Naive thymus-derived CD8-positive, alpha-beta T cell (primary cell): ENCODE measurements at regions of chr5 and their contacts with region 1.

Region 1: DNA sequence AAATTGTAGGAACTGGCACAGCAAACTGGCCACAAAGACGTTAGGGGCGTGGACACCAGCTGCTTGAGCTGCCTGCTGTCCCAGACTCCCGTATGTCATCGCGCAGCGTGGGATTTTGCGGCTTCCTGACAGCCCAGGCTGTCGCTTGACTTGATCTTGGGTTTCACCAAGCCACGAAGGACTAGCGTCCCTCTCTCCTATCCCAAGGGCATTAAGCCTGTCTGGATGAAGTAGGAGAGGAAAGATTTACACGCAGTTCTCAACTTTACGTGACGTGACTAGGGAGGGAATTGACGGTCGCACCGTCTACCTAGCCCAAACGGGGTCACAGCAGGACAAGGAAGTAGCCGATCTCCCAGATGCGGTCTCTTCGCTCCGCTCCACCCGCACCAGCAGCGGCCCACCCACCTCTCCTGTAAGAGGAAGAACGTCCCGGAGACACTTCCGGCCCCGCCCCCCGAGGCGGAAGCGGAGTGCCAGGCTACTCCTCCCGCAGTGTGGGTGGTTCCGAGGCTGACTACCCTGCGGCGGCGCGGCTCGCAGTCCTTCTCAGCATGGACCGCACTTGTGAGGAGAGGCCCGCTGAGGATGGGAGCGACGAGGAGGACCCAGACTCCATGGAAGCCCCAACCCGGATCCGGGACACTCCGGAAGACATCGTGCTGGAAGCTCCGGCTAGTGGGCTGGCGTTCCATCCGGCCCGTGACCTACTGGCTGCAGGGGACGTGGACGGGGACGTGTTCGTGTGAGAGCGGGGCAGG is at the start of gene WDR55:
- DNase-seq: peak; percentile 91 to 98 (median 94)
- ATAC-seq: peak; percentile 91 to 93
- H3K4me3 Mint-ChIP-seq: peak within 1 kb of the TSS; percentile 91 to 99 (median 97)
- H3K27ac Mint-ChIP-seq: peak within 1 kb of the TSS; percentile 97 to 99 (median 98)
- H3K4me1 Mint-ChIP-seq: peaks cover 24 to 47% (median 38%) of the 10 kb centered on the region in 4 donors
- H3K27me3 Mint-ChIP-seq: no peaks in the 10 kb centered on the region
- polyA plus RNA-seq, gene WDR55: 9.2 to 15.6 (median 9.6) TPM

Region 2: DNA sequence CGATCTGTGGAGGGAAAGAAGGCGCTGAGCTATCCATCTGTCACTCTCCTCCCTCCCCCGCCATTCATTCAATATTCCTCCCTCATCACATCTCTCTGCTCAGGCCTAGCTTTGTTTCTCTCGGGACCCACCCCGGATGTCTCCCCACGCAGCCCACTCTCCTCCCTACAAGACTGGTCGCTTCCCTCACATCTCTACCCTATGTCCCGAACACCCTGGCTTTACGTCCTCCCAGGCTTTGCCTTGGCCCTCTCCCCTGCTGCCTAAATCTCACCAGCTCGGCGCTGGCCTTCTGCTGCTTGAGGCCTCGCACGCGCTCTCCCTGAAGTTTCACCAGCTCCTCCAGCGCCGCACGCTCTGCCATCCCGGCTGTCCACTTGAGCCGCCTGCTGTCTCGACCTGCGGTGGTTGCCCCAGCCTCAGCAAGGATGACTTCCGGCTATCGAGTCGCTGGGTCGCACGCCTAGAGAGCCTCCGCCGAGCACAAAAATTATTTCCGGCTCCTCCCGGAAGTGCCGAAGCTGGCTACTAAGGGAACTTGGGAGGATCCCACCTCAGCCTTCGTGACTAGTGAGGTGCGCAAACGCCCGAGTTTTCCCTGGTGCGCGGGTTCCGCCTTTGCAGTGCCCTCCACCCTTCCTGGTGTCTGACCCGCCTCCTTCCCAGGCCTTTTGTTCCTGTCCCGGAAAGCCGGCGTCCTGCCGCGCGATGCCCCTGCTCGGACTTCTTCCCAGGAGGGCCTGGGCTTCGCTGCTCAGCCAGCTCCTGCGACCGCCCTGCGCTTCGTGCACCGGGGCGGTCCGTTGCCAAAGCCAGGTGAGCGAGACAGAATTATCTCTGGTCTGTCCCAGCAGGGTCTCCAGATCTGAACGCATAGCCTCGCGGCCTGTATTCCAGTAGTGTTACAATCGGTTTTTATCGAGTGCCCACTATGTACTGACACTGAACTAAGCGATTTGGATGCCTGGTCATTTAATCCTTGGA is 26.7 kb after region 1 on chr5 and contains the starts of genes HARS1 and HARS2:
- POLR2A ChIA-PET with region 1: interaction called, 23 read pairs
- DNase-seq: peak; percentile 60 to 87 (median 77)
- ATAC-seq: peak; percentile 92 to 94
- H3K4me3 Mint-ChIP-seq: peak within 1 kb of the TSS; percentile 99 to 100 (median 99)
- H3K27ac Mint-ChIP-seq: peak within 1 kb of the TSS; percentile 90 to 99 (median 98)
- H3K4me1 Mint-ChIP-seq: peaks cover 14 to 49% (median 46%) of the 10 kb centered on the region in 4 donors
- H3K27me3 Mint-ChIP-seq: no peaks in the 10 kb centered on the region
- polyA plus RNA-seq, gene HARS1: 63.2 to 77.5 (median 65.3) TPM
- polyA plus RNA-seq, gene HARS2: 15.4 to 24.6 (median 20.1) TPM

Region 3: DNA sequence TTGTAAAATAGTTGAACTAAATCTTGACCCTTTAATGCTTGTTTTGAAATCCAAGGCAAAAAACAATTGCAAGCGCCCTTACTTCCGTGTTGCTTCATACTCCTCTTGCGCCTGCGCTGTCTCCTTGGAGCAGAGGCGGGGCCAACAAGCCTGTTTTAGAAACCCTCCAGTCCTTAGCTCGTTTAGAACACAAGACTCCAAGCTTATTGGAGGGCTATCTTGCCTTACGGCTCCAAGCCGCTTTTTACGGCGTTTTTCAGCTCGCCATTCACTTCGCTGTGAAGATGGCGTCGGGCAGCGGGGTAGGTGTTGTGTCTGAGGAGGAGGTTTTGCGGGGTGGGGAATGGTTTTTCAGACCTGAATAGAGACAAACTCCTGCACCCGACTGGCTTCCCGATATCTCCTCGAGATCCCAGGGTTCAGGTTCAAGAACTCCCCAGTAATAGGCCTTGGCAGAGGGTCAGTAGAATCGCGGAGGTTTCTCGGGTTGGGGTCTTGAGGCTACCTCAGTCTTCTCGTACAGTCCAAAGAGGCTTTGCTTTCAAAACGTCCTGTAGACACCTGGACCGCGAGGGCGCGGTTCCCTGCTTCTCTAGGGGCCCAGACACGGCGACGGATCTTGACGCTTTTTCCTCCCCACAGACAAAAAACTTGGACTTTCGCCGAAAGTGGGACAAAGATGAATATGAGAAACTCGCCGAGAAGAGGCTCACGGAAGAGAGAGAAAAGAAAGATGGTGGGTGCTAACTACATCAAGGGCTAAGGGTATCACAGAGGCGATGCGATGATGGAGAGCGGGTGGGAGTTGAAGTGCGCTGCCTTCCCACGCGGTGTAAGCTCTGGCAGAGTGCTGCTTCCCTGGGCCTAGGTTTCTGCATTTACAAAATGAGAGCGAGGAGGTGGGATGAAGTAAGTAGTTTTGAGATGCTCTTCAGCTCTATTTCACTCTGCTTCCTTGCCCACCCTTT is 35.9 kb after region 1 on chr5 and contains the start of gene ZMAT2:
- POLR2A ChIA-PET with region 1: interaction called, 10 read pairs
- DNase-seq: peak; percentile 79 to 97 (median 92)
- ATAC-seq: peak; percentile 97 to 98
- H3K4me3 Mint-ChIP-seq: peak within 1 kb of the TSS; percentile 91 to 100 (median 98)
- H3K27ac Mint-ChIP-seq: peak within 1 kb of the TSS; percentile 93 to 99 (median 98)
- H3K4me1 Mint-ChIP-seq: peaks cover 23 to 33% (median 31%) of the 10 kb centered on the region in 4 donors
- H3K27me3 Mint-ChIP-seq: no peaks in the 10 kb centered on the region
- polyA plus RNA-seq, gene ZMAT2: 64.2 to 81.3 (median 77.0) TPM